Ascending aorta (tissue), 2 donors: ENCODE measurements at regions of chr22 and their contacts with region 1.

Region 1: DNA sequence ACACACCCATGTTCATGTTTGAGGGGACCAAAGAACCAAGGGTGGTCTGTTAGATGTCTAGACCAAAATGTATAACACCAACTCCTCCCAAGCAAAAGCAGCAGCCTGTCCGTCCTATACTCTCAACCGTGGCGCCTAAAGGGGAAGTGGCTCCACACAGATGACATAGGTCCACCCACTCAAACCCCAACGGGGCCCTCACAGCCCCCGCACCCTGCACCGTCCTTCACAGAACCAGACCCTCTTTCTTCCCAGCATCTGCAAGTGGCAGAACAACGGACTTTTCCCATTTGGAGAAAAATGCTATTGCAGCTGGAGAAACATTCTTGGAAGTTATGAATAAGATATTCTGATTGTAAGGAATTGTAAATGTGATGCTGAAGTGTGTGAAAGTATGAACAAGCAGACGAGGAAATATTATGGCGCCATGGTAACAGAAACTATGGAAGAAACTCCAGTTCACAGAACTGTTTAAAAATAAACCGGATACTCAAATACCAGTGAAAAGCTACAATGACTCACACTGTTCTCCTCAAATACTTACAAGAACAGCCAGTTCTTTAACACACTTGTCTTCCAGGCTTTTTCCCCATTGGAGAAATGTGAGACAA is 76.5 kb upstream of the ARFGAP3 start:
- DNase-seq: peak in 1 of 2 donors; percentile 86
- H3K4me3 ChIP-seq: peak overlapping the region in 1 of 2 donors; percentile 34
- H3K27ac ChIP-seq: peak overlapping the region; percentile 97 to 98
- H3K4me1 ChIP-seq: peaks cover 70 to 96% of the 10 kb centered on the region in 2 donors
- H3K27me3 ChIP-seq: no peaks in the 10 kb centered on the region
- CTCF ChIP-seq: no peak

Region 2: DNA sequence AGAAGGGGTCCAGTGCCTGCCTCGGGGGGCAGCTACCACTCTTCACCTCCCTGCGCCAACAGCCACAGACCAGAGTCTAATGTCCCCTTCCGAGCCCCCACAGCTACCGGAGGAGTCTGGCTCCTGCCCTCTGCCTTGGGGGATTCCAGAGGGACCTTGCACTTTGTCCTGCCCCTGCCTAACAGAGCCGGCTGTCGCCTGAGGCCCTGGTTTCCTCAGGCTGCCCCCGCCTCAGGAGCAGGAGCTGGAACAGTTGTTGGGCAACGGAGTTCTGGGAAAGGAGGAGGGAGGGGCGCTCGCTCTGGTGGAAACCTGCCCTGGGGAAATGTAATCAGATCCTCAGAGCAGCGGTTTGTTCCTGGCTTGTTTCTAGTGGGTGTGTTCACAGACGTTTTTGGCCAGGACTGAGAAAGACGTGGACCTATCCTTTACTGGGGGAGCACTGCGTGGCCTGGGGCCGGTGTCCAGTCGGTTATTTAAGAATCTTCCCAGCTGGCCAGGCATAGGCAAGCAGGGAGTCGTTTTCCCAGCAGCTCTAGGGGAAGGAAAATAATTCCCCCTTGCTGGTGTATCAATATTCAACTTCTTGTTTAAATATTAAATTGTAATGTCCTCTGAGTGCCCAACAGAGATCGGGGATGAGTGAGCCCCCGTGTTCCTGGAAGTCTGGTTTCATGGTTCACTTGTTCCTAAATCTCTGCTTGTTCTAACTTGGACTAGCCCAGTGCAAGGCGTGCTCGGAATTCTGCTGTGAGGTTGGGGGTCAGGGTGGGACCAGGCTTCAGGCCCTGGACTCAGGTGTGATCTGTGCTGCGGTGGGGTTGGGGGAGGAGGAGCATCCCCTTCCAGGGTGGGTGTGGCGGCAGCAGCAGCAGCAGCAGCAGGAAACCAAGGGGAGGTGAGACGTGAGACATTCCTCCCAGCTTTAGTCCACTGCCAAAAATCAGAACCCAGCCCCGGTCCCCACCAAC is 245.1 kb before region 1 on chr22:
- intact Hi-C with region 1: loop called (anchors 10 kb)
- DNase-seq: peak; percentile 79 to 98
- H3K4me3 ChIP-seq: peak overlapping the region in 1 of 2 donors; percentile 31
- H3K27ac ChIP-seq: peak overlapping the region; percentile 93 to 97
- H3K4me1 ChIP-seq: peaks cover 39 to 56% of the 10 kb centered on the region in 2 donors
- H3K27me3 ChIP-seq: no peaks in the 10 kb centered on the region
- CTCF ChIP-seq: no peak

Region 3: GRCh38 chr22:42889304-42889703 is 44.3 kb before region 1 on chr22:
- intact Hi-C with region 1: no loop called
- DNase-seq: no peak
- H3K4me3 ChIP-seq: no peak overlapping the region
- H3K27ac ChIP-seq: no peak overlapping the region
- H3K4me1 ChIP-seq: peaks cover 3 to 7% of the 10 kb centered on the region in 2 donors
- H3K27me3 ChIP-seq: no peaks in the 10 kb centered on the region
- CTCF ChIP-seq: no peak

Region 4: GRCh38 chr22:42920101-42920820 is 13.3 kb before region 1 on chr22:
- intact Hi-C with region 1: loop called (anchors 1 kb)
- DNase-seq: peak in 1 of 2 donors; percentile 84
- H3K4me3 ChIP-seq: no peak overlapping the region
- H3K27ac ChIP-seq: peak overlapping the region; percentile 67 to 82
- H3K4me1 ChIP-seq: peaks cover 11 to 47% of the 10 kb centered on the region in 2 donors
- H3K27me3 ChIP-seq: no peaks in the 10 kb centered on the region
- CTCF ChIP-seq: no peak

Region 5: GRCh38 chr22:42947211-42947990 is 13.8 kb after region 1 on chr22:
- intact Hi-C with region 1: no loop called
- DNase-seq: peak in 1 of 2 donors; percentile 63
- H3K4me3 ChIP-seq: no peak overlapping the region
- H3K27ac ChIP-seq: peak overlapping the region in 1 of 2 donors; percentile 37
- H3K4me1 ChIP-seq: peaks cover 37 to 72% of the 10 kb centered on the region in 2 donors
- H3K27me3 ChIP-seq: no peaks in the 10 kb centered on the region
- CTCF ChIP-seq: no peak

Region 6: GRCh38 chr22:43015677-43016042 is 82.1 kb after region 1 on chr22:
- intact Hi-C with region 1: no loop called
- DNase-seq: no peak
- H3K4me3 ChIP-seq: peak overlapping the region; percentile 91 to 99
- H3K27ac ChIP-seq: peak overlapping the region in 1 of 2 donors; percentile 75
- H3K4me1 ChIP-seq: peaks cover 3 to 6% of the 10 kb centered on the region in 2 donors
- H3K27me3 ChIP-seq: no peaks in the 10 kb centered on the region
- CTCF ChIP-seq: no peak